ENCODE measurements at regions of chr1 and their contacts with region 1.

Region 1: GRCh38 chr1:118716782-118717181 is 271.4 kb downstream of the TBX15 start:
- DNase-seq: no peak
- ATAC-seq: no peak
- H3K4me3 Mint-ChIP-seq: no peak overlapping the region
- H3K27ac Mint-ChIP-seq: no peak overlapping the region
- H3K4me1 Mint-ChIP-seq: no peaks in the 10 kb centered on the region
- H3K27me3 Mint-ChIP-seq: 0 out of 2 replicates have a peak, but pooled peaks cover 3% of the 10 kb centered on the region
- CTCF ChIP-seq: no peak

Region 2: DNA sequence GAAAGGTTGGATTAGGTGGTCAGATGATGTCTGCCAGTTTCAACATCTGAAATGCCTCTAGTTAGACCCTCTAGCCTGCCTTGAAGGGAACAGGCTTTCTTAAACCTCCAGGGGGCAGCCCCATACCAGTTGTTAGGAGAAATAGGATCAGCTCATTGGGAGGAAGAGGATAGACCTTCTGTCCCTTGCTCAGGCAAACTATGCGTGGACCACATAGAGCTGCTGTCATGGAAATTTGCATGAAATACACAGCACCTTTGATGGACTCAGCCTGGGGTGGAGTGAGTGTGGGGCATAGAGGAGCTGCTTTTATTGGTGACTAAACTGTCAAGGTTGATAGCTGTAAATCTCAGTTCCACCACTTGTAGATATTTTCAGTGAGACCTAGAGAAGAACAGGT is 493.4 kb before region 1 on chr1:
- CTCF ChIA-PET with region 1: interaction called, 11 read pairs
- POLR2A ChIA-PET with region 1: no interaction called
- DNase-seq: peak; percentile 64
- ATAC-seq: peak; percentile 95
- H3K4me3 Mint-ChIP-seq: no peak overlapping the region
- H3K27ac Mint-ChIP-seq: no peak overlapping the region
- H3K4me1 Mint-ChIP-seq: peaks cover 3% of the 10 kb centered on the region
- H3K27me3 Mint-ChIP-seq: no peaks in the 10 kb centered on the region; the same call in 1 of the 2 replicates
- CTCF ChIP-seq: peak; percentile 49